Naive thymus-derived CD8-positive, alpha-beta T cell (primary cell): ENCODE measurements at regions of chr1 and their contacts with region 1.

Region 1: DNA sequence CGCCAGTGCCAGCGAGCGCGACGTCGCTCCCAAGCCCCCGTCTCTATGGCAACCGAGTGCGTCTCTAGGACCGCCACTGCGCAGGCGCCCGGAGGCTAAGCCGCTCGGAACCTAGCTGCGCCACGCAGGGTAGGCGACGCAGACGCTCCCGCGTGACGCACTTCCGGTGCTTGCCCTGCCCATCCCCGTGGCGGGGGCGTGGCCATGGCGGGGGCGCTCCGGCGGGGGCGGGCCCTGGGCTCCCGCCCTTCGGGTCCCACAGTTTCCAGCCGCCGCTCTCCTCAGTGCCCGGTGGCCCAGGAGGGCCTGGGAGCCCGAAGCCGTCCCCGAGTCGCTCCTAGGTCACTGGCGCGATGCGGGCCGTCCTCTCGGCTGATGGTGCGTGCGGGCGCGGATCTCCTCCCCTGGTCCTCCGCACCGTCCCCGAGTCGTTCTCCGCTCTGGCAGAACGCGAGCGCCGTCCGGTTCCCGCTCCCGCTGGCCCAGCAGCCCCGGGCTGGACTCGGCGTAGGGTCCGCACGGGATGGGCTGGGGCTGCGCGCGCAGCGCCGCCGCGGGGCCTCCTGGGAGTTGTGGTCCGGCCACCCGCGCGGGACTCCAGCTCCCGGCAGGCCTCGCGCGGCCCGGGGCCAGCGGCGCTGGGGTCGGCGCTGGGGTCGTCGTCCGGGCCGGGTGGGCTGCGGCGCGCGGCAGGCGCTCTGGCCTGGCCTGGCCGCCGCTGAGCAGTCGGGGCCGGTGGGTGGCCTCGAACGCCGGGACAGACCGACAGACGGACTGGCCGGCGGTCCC is at the start of gene MIB2:
- DNase-seq: peak; percentile 96 to 99 (median 99)
- ATAC-seq: peak; percentile 74 to 79
- H3K4me3 Mint-ChIP-seq: peak within 1 kb of the TSS; percentile 92 to 99 (median 97)
- H3K27ac Mint-ChIP-seq: peak within 1 kb of the TSS; percentile 94 to 100 (median 99)
- H3K4me1 Mint-ChIP-seq: peaks cover 8 to 33% (median 31%) of the 10 kb centered on the region in 4 donors
- H3K27me3 Mint-ChIP-seq: no peaks in the 10 kb centered on the region
- polyA plus RNA-seq, gene MIB2: 23.6 to 31.1 (median 27.2) TPM

Region 2: GRCh38 chr1:1059494-1060280 is 555.8 kb before region 1 on chr1:
- POLR2A ChIA-PET with region 1: no interaction called
- DNase-seq: peak; percentile 78 to 94 (median 93)
- ATAC-seq: peak; percentile 70 to 73
- H3K4me3 Mint-ChIP-seq: peak overlapping the region; percentile 61 to 85 (median 78)
- H3K27ac Mint-ChIP-seq: peak overlapping the region in 4 of 10 donors; percentile 43 to 71 (median 62)
- H3K4me1 Mint-ChIP-seq: peaks cover 10 to 33% (median 24%) of the 10 kb centered on the region in 4 donors
- H3K27me3 Mint-ChIP-seq: peaks cover 0 to 32% (median 9%) of the 10 kb centered on the region in 5 donors

Region 3: DNA sequence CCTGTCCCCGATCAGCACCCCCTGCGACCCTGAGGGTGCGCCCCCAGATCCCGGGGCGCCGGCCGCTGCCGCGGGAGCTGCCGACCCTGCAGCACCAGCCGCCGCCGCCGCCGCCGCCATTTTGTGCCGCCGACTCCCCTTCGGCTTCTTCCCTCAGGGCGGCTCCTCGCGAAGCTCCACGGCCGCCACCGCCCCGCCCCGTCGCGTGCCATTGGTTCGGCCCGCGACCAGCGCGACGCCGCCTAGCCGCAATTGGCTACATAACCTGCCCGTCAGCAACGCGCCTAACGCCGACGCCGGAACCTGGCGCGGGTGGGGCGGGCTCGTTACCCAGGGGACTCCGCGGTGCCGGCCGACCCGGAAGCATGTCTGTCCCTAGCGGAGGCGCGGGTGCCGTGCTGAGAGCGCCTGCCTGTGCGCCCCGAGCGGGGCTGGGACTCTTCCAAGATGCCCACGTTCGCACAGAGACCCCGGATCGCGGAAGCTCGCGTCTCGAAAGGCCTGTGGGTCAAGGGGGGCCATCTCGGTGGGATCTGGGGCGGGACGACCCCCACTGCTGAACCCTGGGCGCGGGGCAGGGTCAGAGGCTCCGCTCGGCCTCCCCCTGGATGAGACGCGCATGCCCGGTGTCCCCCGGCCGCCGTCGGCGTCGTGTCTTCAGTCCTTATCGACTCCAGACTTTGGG is 216.1 kb before region 1 on chr1 and contains the start of gene CCNL2:
- POLR2A ChIA-PET with region 1: interaction called, 10 read pairs
- DNase-seq: peak; percentile 97 to 99 (median 99)
- ATAC-seq: peak; percentile 93 to 95
- H3K4me3 Mint-ChIP-seq: peak within 1 kb of the TSS; percentile 86 to 95 (median 89)
- H3K27ac Mint-ChIP-seq: peak within 1 kb of the TSS; percentile 85 to 96 (median 92)
- H3K4me1 Mint-ChIP-seq: peaks cover 17 to 60% (median 50%) of the 10 kb centered on the region in 4 donors
- H3K27me3 Mint-ChIP-seq: no peaks in the 10 kb centered on the region
- polyA plus RNA-seq, gene CCNL2: 13.4 to 28.1 (median 13.7) TPM

Region 4: DNA sequence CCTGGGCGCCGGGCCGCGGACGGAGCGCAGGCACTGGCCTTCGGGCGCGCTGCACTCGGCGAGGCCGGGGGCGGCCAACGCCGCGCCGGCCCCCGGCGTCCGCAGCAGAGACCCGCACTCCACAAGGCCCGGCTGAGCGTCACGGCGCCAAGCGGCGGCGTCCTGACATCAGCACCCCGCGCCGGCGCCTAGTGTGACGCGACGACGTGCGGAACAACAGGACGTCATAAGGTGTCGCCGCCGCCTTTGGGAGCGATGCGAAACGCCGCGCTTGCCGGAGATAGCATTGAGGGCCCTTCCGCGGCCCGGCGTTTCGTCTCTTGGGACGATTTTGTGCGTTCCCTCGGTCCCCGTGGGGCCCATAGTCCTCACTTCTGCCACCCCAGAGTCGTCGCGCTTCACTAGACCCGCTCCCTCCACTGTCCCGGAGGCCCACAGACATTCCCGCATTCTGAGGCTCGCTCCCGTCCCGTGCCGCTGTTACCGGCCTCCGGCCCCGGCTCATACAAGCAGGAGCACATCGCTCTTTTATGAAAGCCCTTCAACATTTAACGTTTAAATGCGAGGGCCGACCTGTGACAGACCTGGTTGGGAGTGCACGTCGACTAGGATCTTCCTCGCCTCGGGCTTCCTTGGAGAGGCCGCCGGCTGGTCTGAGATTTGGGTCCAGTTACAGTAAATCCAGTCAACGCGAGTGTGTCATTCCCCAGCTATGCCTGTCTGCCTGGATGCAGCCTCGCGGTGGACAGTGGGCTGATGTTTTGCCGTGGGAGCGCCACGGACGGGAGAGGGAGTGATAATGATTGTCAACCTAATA is 40.5 kb before region 1 on chr1 and contains the start of gene SSU72:
- POLR2A ChIA-PET with region 1: interaction called, 87 read pairs
- DNase-seq: peak; percentile 85 to 96 (median 92)
- ATAC-seq: peak; percentile 77 to 83
- H3K4me3 Mint-ChIP-seq: peak within 1 kb of the TSS; percentile 92 to 99 (median 98)
- H3K27ac Mint-ChIP-seq: peak within 1 kb of the TSS; percentile 99 to 100 (median 100)
- H3K4me1 Mint-ChIP-seq: peaks cover 17 to 44% (median 33%) of the 10 kb centered on the region in 4 donors
- H3K27me3 Mint-ChIP-seq: no peaks in the 10 kb centered on the region
- polyA plus RNA-seq, gene SSU72: 219 to 290 (median 248) TPM

Region 5: GRCh38 chr1:1599030-1599919 is 16.2 kb before region 1 on chr1:
- POLR2A ChIA-PET with region 1: interaction called, 43 read pairs
- DNase-seq: peak in 5 of 10 donors; percentile 25 to 55 (median 40)
- ATAC-seq: peak; percentile 71 to 76
- H3K4me3 Mint-ChIP-seq: peak overlapping the region; percentile 59 to 86 (median 81)
- H3K27ac Mint-ChIP-seq: peak overlapping the region in 3 of 10 donors; percentile 53 to 65 (median 60)
- H3K4me1 Mint-ChIP-seq: peaks cover 5 to 9% (median 7%) of the 10 kb centered on the region in 4 donors
- H3K27me3 Mint-ChIP-seq: peaks cover 0 to 11% (median 0%) of the 10 kb centered on the region in 5 donors

Region 6: GRCh38 chr1:1630271-1630964 is 15.0 kb after region 1 on chr1:
- POLR2A ChIA-PET with region 1: interaction called, 246 read pairs
- DNase-seq: peak; percentile 90 to 97 (median 94)
- ATAC-seq: peak; percentile 73 to 78
- H3K4me3 Mint-ChIP-seq: peak overlapping the region; percentile 85 to 94 (median 91)
- H3K27ac Mint-ChIP-seq: peak overlapping the region; percentile 83 to 99 (median 95)
- H3K4me1 Mint-ChIP-seq: peaks cover 4 to 12% (median 7%) of the 10 kb centered on the region in 4 donors
- H3K27me3 Mint-ChIP-seq: peaks cover 0 to 4% (median 0%) of the 10 kb centered on the region in 5 donors